ENCODE measurements at regions of chr2 and their contacts with region 1.

Region 1: GRCh38 chr2:163191372-163191771 is 352.8 kb upstream of the KCNH7 start:
- DNase-seq: peak; percentile 7
- ATAC-seq: no peak
- H3K4me3 Mint-ChIP-seq: no peak overlapping the region
- H3K27ac Mint-ChIP-seq: no peak overlapping the region
- H3K4me1 Mint-ChIP-seq: no peaks in the 10 kb centered on the region
- H3K27me3 Mint-ChIP-seq: no peaks in the 10 kb centered on the region

Region 2: GRCh38 chr2:162926501-162926900 is 264.9 kb before region 1 on chr2:
- CTCF ChIA-PET with region 1: no interaction called
- POLR2A ChIA-PET with region 1: no interaction called
- intact Hi-C with region 1: no loop called
- DNase-seq: no peak
- ATAC-seq: no peak
- H3K4me3 Mint-ChIP-seq: no peak overlapping the region
- H3K27ac Mint-ChIP-seq: no peak overlapping the region
- H3K4me1 Mint-ChIP-seq: no peaks in the 10 kb centered on the region
- H3K27me3 Mint-ChIP-seq: no peaks in the 10 kb centered on the region

Region 3: GRCh38 chr2:163632333-163632732 is 441.0 kb after region 1 on chr2:
- CTCF ChIA-PET with region 1: no interaction called
- POLR2A ChIA-PET with region 1: no interaction called
- intact Hi-C with region 1: no loop called
- DNase-seq: no peak
- ATAC-seq: no peak
- H3K4me3 Mint-ChIP-seq: no peak overlapping the region
- H3K27ac Mint-ChIP-seq: no peak overlapping the region
- H3K4me1 Mint-ChIP-seq: no peaks in the 10 kb centered on the region
- H3K27me3 Mint-ChIP-seq: no peaks in the 10 kb centered on the region

Region 4: DNA sequence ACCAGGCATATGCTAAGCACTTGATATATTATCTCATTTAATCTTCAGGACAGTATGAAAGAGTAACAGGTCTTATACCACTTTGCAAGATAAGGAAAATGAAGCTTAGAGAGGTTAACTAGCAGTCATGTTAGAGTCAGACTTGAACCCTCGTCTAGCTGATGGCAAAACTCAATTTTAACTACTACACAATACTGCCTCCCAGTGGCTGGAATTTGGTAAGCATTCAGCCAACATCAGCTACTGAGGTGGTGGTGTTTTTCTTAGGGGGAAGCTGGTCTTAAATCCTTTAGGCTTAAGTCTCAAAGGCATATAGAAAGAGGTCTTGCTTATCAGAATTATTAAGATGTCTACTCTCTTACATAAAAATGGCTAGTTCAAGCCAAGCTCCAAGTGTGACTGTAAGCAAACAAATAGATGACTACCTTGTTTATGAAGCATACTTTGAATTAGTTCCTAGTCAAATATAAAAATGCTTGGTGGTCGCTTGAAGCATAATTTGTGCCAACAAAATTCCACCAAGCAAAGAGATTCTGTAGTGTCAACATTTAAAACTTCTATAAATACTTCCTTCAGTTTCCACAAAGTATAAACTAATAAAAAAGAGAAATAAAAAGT is 869.9 kb after region 1 on chr2:
- CTCF ChIA-PET with region 1: no interaction called
- POLR2A ChIA-PET with region 1: no interaction called
- intact Hi-C with region 1: loop called in 1 of 2 experiments (anchors 5 kb)
- DNase-seq: peak; percentile 14
- ATAC-seq: no peak
- H3K4me3 Mint-ChIP-seq: no peak overlapping the region
- H3K27ac Mint-ChIP-seq: no peak overlapping the region
- H3K4me1 Mint-ChIP-seq: no peaks in the 10 kb centered on the region
- H3K27me3 Mint-ChIP-seq: no peaks in the 10 kb centered on the region

Region 5: GRCh38 chr2:164538240-164538866 is 1347.0 kb after region 1 on chr2:
- CTCF ChIA-PET with region 1: no interaction called
- POLR2A ChIA-PET with region 1: no interaction called
- intact Hi-C with region 1: loop called in 1 of 2 experiments (anchors 5 kb)
- DNase-seq: no peak
- ATAC-seq: no peak
- H3K4me3 Mint-ChIP-seq: no peak overlapping the region
- H3K27ac Mint-ChIP-seq: no peak overlapping the region
- H3K4me1 Mint-ChIP-seq: no peaks in the 10 kb centered on the region
- H3K27me3 Mint-ChIP-seq: no peaks in the 10 kb centered on the region